ENCODE measurements at regions of chr20 and their contacts with region 1.

Region 1: DNA sequence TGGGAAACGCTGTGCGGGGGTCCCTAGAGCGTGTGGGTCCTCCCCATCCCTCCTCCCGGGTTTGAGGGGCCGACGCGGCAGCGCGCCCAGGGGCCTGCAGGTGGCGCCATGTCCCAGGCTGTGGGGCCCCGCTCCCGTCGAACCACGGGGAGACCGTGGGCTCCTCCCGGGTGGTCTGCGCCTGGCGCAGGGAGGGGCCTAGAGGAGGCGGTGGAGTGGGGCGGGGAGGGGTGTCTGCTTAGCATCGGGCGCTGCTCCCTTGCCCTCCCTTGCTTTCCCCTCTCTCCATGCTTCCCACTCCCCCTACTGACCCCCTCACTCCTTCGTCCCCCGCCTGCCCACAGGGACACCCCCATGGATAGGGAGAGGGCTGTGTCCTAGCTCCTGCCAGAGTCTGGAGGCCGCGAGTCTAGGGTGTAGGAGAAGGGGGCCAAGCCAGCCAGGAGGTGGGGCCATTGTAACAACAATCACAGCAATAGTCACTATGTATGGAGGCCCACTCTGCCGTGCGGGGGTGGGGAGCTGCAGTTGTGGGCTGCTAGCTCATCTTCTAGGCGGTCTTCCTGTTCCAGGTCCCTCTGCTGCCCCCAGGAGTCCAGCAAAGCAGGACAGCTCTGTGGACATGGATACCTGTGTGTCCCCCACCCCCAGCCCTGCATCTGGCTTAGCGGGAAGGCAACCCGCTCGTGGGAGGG is 51.7 kb downstream of the CHMP4B start:
- DNase-seq: peak in 8 of 10 donors; percentile 42 to 92 (median 59)

Region 2: DNA sequence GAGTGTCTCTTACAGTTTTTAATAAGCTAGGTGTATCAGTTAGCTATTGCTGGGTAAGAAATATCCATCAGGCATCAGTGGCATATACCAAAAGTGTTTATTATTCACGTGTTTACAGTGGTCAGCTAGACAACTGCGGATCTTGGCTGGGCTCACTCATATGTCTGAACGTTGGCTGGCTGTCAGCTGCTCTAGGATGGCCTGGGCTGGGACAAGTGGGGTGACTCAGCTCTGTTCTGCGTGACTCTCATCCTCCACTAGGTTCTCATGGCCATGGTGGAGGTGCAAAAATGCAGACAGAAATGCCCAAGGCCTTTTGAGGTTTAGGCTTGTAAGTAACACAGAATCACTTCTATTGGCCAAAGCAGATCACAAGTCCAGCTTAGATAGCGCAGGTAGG is 109.1 kb before region 1 on chr20:
- intact Hi-C with region 1: no loop called
- DNase-seq: no peak

Region 3: GRCh38 chr20:33933469-33933909 is 70.6 kb after region 1 on chr20:
- intact Hi-C with region 1: no loop called
- DNase-seq: peak; percentile 47 to 94 (median 72)

Region 4: DNA sequence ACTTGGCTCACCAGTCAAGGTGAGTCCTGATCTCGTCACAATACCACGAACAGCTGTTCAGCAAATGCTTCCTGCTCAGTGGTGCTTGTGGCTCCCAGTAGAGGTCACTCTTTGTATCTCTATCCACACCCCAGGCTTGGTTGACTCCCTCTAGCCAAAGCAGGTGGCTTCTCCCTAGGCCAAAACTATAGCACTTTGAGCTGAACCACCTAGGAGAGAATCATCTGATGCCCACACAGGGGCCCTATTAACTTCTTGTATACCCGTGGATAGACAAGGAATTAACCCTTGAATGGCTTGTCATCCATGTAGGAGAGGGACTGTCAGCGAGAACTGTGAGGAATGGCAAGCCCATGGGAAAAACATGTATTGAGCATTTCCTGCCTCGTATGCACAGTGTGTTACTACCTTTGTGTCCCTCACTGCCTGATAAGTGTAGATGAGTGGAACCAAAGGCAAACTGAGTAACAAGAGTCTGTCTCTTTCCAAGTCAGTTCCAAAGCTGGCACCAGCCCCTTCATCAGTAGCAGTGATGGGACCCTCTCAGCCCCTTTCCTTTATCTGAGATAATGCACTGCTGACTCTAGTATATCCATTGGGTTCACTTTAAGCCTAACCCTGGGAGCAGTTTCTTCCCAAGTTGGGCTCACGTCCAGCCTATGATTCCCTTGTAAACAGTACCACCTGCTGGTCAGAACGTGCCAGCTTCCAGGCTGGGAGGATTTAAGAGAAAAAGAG is 206.7 kb after region 1 on chr20:
- intact Hi-C with region 1: loop called (anchors 1 kb)
- DNase-seq: peak; percentile 50 to 97 (median 80)

Region 5: GRCh38 chr20:34129518-34130162 is 266.8 kb after region 1 on chr20:
- intact Hi-C with region 1: loop called (anchors 1 kb)
- DNase-seq: peak in 8 of 10 donors; percentile 28 to 91 (median 49)